Left colon (tissue), 2 donors: ENCODE measurements at regions of chr2 and their contacts with region 1.

Region 1: GRCh38 chr2:240434728-240435456 is 571 bp upstream of the GPC1 start:
- DNase-seq: peak; percentile 88 to 93
- ATAC-seq: peak; percentile 80

Region 2: DNA sequence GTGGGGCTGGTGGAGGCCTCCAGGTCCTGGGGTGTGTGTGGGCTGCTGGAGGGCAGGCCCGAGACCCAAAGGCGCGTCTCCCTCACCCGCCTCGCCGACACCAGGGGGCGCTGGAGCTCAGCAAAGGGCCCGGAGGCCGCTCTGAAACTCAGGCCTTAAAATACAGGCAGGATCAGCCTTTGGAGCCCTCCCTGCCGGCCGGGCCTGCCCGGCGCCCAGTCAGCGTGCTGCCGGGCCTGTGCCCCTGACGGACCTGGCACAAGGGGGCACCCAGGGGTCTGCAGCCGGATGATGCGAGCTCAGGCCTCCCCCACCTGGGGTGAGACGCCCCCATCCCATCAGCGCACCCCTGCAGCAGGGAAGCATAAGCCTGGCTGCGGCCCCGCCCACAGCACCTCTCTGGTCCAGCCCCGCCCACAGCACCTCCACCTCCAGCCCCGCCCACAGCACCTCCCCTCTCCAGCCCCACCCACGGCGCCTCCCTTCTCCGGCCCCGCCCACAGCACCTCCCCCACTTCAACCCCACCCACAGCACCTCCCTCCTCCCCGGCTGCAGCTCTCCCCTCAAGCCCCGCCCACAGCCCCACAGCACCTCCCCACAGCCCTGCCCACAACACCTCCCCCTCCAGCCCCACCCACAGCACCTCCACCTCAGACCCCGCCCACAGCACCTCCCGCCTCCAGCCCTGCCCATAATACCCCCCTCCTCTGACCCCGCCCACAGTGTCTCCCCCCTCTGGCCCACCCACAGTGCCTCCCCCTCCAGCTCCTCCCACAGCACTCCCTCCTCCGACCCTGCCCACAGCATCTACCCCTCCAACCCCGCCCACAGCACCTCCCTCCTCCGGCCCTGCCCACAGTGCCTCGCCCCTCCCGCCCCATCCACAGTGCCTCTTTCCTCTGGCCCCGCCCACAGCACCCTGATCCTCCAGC is 201.7 kb before region 1 on chr2:
- intact Hi-C with region 1: loop called (anchors 2 to 5 kb)
- DNase-seq: peak; percentile 80 to 81
- ATAC-seq: peak; percentile 87